MCF 10A (cell line): ENCODE measurements at regions of chr2 and their contacts with region 1.

Region 1: GRCh38 chr2:151238527-151239487 is 22.9 kb downstream of the RBM43 start:
- DNase-seq: peak; percentile 78
- H3K4me3 Mint-ChIP-seq: no peak overlapping the region
- H3K27ac Mint-ChIP-seq: peak overlapping the region; percentile 40
- H3K4me1 Mint-ChIP-seq: peaks cover 16% of the 10 kb centered on the region
- H3K27me3 Mint-ChIP-seq: no peaks in the 10 kb centered on the region
- CTCF ChIP-seq: peak; percentile 91

Region 2: DNA sequence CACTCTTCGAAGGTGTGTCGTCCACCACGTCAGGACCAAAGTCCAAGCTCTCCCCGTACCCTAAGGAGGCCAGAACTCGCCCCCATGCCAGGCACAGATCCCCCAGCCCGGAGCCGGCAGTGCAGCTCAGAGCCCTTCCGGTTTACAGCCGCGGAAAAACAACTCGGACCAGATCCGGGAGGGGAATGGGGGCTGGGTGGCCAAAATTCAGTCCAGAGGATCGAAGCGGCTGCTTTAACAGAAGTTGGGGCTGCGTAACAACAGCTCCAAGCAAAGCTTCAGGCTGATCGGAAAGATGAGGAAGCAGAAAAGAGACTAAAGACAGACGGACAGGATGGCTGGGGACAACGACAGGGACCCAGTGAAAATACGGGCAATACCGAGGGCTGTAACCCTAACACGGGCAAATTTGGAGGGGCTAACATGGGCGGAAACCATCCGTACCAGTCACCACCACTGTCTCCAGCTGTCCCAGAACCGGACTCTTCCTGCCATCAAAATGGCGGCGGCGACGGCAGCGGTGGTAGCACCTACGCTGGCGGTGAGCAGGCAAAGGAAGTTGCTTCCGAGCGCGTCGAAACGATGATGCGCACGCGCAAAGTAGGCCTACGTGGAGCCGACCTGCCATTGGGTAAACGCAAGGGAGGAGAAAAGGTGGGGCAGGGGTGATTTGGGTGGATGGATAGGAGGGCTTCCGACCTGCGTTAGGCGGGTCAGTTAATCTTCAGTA is 1651.4 kb before region 1 on chr2 and contains the start of gene MMADHC:
- CTCF ChIA-PET with region 1: interaction called, 25 read pairs
- POLR2A ChIA-PET with region 1: interaction called, 3 read pairs
- intact Hi-C with region 1: no loop called
- DNase-seq: peak; percentile 95
- H3K4me3 Mint-ChIP-seq: peak within 1 kb of the TSS; percentile 93
- H3K27ac Mint-ChIP-seq: peak within 1 kb of the TSS; percentile 99
- H3K4me1 Mint-ChIP-seq: peaks cover 21% of the 10 kb centered on the region
- H3K27me3 Mint-ChIP-seq: no peaks in the 10 kb centered on the region
- CTCF ChIP-seq: no peak
- total RNA-seq, gene MMADHC: 151 and 156 TPM in 2 replicates

Region 3: DNA sequence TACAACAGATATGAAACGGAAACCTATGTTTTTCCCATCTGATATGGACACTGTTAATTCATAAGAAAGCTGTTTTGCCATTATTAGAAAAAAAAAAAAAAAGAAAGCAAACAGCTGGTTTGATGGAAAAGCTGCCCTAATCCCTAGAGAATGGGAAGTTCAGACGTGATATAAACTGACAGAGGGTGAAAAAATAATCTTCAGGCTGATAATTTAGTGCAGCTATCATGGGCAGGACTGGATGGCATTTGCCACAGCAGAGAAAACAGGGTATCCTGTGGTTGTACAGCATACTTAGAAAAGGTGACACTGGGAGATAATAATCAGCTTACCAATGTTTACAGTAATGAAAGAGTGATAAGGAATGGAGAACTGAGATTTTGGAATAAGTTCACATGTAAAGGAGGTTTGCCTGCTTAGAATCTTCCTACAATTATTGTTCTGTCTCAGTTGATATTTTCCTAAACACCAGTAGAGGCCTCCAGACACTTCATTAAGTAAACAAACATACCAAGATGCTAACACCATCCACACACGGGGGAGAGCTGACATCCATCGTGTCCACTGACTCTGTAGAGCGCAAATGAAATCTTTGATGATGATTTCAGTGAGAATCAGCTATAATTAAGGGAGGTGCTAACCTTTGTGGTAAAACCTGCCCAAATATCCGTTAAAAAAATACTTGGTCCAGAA is 1439.6 kb before region 1 on chr2:
- CTCF ChIA-PET with region 1: interaction called, 11 read pairs
- POLR2A ChIA-PET with region 1: no interaction called
- intact Hi-C with region 1: loop called (anchors 1 kb)
- DNase-seq: peak; percentile 42
- H3K4me3 Mint-ChIP-seq: no peak overlapping the region
- H3K27ac Mint-ChIP-seq: no peak overlapping the region
- H3K4me1 Mint-ChIP-seq: no peaks in the 10 kb centered on the region
- H3K27me3 Mint-ChIP-seq: no peaks in the 10 kb centered on the region
- CTCF ChIP-seq: peak; percentile 33

Region 4: DNA sequence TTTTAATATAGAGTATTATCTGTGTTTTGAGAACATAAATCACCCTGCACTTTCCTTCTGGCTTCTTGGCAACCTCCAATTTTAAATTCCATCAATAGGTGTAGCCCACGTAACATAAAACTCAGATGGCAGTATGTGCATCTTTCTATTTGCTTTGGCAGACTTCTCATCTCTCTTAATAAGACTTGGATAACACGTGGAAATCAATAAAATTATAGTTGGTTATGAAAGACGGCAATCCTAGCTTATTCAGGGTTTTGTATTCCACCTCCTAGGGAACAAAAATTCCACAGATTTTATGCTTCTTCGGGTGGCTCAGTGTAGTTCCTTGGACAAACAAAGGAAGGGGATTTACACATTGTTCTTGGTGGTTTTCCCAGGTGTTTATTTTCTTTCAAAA is 1050.6 kb before region 1 on chr2:
- CTCF ChIA-PET with region 1: interaction called, 4 read pairs
- POLR2A ChIA-PET with region 1: no interaction called
- intact Hi-C with region 1: loop called (anchors 5 kb)
- DNase-seq: peak; percentile 51
- H3K4me3 Mint-ChIP-seq: peak overlapping the region; percentile 4
- H3K27ac Mint-ChIP-seq: peak overlapping the region; percentile 60
- H3K4me1 Mint-ChIP-seq: peaks cover 20% of the 10 kb centered on the region
- H3K27me3 Mint-ChIP-seq: no peaks in the 10 kb centered on the region
- CTCF ChIP-seq: no peak

Region 5: GRCh38 chr2:150911766-150912280 is 327.0 kb before region 1 on chr2:
- CTCF ChIA-PET with region 1: interaction called, 10 read pairs
- POLR2A ChIA-PET with region 1: interaction called, 4 read pairs
- intact Hi-C with region 1: loop called (anchors 5 kb)
- DNase-seq: peak; percentile 90
- H3K4me3 Mint-ChIP-seq: peak overlapping the region; percentile 51
- H3K27ac Mint-ChIP-seq: peak overlapping the region; percentile 70
- H3K4me1 Mint-ChIP-seq: peaks cover 21% of the 10 kb centered on the region
- H3K27me3 Mint-ChIP-seq: no peaks in the 10 kb centered on the region
- CTCF ChIP-seq: peak; percentile 17

Region 6: GRCh38 chr2:151161821-151162551 is 76.8 kb before region 1 on chr2:
- CTCF ChIA-PET with region 1: interaction called, 11 read pairs
- POLR2A ChIA-PET with region 1: no interaction called
- intact Hi-C with region 1: no loop called
- DNase-seq: peak; percentile 18
- H3K4me3 Mint-ChIP-seq: no peak overlapping the region
- H3K27ac Mint-ChIP-seq: no peak overlapping the region
- H3K4me1 Mint-ChIP-seq: no peaks in the 10 kb centered on the region
- H3K27me3 Mint-ChIP-seq: peaks cover 15% of the 10 kb centered on the region
- CTCF ChIP-seq: no peak

Region 7: DNA sequence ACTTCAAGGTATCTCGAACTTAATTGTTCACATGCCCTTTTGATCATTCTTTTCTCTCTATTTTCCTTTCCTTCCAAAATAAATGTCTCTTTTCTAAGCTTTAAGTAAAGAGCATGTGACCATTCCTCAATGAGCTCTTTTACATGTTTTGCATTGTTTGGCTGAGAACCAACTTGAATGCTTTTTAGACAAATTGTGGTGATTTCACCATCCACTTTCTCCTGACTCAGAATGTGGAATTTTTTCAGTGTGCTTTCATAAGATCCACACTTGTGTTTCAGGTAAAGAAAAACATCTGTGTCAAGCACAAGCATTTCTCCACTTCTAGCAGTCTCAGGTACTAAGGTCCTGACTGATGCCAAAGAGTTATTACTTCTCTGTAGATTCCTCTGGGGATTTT is 12.2 kb after region 1 on chr2:
- CTCF ChIA-PET with region 1: interaction called, 31 read pairs
- POLR2A ChIA-PET with region 1: interaction called, 10 read pairs
- intact Hi-C with region 1: no loop called
- DNase-seq: peak; percentile 49
- H3K4me3 Mint-ChIP-seq: no peak overlapping the region
- H3K27ac Mint-ChIP-seq: peak overlapping the region; percentile 84
- H3K4me1 Mint-ChIP-seq: peaks cover 25% of the 10 kb centered on the region
- H3K27me3 Mint-ChIP-seq: no peaks in the 10 kb centered on the region
- CTCF ChIP-seq: no peak